ENCODE measurements at regions of chr19 and their contacts with region 1.

Region 1: GRCh38 chr19:46759817-46760333 is 13.6 kb upstream of the STRN4 start:
- DNase-seq: peak; percentile 97
- ATAC-seq: peak; percentile 71
- H3K4me3 ChIP-seq: no peak overlapping the region
- H3K27ac ChIP-seq: peak overlapping the region; percentile 85; the same call in 1 of the 2 replicates
- H3K4me1 ChIP-seq: peaks cover 12% of the 10 kb centered on the region
- H3K27me3 ChIP-seq: no peaks in the 10 kb centered on the region
- CTCF ChIP-seq: no peak
- POLR2A ChIP-seq: no peak
- RAD21 ChIP-seq: no peak

Region 2: GRCh38 chr19:46788262-46788967 is 28.5 kb after region 1 on chr19 and contains the start of gene SLC1A5:
- CTCF ChIA-PET with region 1: no interaction called
- POLR2A ChIA-PET with region 1: no interaction called
- dilution Hi-C with region 1: no loop called
- in situ Hi-C with region 1: no loop called
- intact Hi-C with region 1: loop called (anchors 1 kb)
- DNase-seq: peak; percentile 96
- ATAC-seq: peak; percentile 76
- H3K4me3 ChIP-seq: peak within 1 kb of the TSS; percentile 97
- H3K27ac ChIP-seq: peak within 1 kb of the TSS; percentile 84
- H3K4me1 ChIP-seq: peaks cover 14% of the 10 kb centered on the region
- H3K27me3 ChIP-seq: no peaks in the 10 kb centered on the region
- CTCF ChIP-seq: no peak
- POLR2A ChIP-seq: peak; percentile 100
- RAD21 ChIP-seq: no peak
- total RNA-seq, gene SLC1A5: 105 and 142 TPM in 2 replicates

Region 3: DNA sequence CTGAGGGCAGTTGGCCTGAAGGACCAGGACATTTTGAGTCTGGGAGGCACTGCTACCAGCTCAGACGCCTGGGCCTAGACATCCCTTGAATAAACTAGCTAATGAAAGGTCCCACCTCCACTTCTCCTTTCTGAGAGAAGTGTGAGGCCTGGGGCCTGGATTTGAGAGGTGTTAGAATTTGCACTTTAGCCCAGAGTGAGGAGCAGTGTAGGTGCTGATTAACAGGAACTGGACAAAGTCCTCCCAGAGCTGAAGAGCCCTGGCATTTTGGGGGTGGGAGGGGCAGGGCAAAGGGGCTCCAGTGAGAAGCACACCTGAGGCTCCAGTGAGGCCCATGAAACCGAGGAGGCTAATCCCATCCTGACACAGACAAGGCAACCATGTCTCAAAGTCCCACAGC is 43.7 kb after region 1 on chr19:
- CTCF ChIA-PET with region 1: no interaction called
- POLR2A ChIA-PET with region 1: no interaction called
- dilution Hi-C with region 1: no loop called
- in situ Hi-C with region 1: no loop called
- intact Hi-C with region 1: no loop called
- DNase-seq: no peak
- ATAC-seq: no peak
- H3K4me3 ChIP-seq: no peak overlapping the region
- H3K27ac ChIP-seq: no peak overlapping the region
- H3K4me1 ChIP-seq: no peaks in the 10 kb centered on the region
- H3K27me3 ChIP-seq: no peaks in the 10 kb centered on the region
- CTCF ChIP-seq: no peak
- POLR2A ChIP-seq: no peak
- RAD21 ChIP-seq: no peak

Region 4: GRCh38 chr19:46984077-46985010 is 224.5 kb after region 1 on chr19:
- CTCF ChIA-PET with region 1: no interaction called
- POLR2A ChIA-PET with region 1: no interaction called
- dilution Hi-C with region 1: no loop called
- in situ Hi-C with region 1: loop called (anchors 5 kb)
- intact Hi-C with region 1: no loop called
- DNase-seq: peak; percentile 50
- ATAC-seq: no peak; the same call in 1 of the 2 replicates
- H3K4me3 ChIP-seq: no peak overlapping the region
- H3K27ac ChIP-seq: no peak overlapping the region
- H3K4me1 ChIP-seq: peaks cover 14% of the 10 kb centered on the region
- H3K27me3 ChIP-seq: no peaks in the 10 kb centered on the region
- CTCF ChIP-seq: no peak
- POLR2A ChIP-seq: no peak
- RAD21 ChIP-seq: no peak